ENCODE measurements at regions of chr1 and their contacts with region 1.

Region 1: DNA sequence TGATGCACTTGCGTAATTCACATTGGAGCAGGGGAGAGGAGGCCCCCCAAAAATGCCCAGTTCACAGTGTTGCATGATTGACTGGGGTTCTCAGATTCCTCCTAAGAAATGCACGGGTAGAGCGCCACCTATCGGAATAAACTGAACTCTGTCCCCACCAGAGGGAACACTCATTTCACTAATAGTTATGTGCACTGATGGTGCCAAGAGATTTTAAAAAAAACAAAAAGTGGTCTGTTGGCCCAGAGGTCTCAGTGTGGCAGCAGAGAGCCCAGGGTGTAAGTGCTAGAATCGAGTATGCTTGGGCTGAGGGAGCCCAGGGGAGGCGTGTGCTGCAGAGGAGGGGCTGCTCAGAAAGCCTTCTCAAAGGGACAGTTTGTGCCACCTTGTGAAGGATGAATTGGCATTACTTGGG is 6.9 kb downstream of the PINK1 start:
- DNase-seq: peak in 7 of 9 donors; percentile 34 to 66 (median 59)
- ATAC-seq: peak; percentile 83
- H3K4me3 ChIP-seq: no peak overlapping the region
- H3K4me3 Mint-ChIP-seq: no peak overlapping the region
- H3K27ac ChIP-seq: no peak overlapping the region
- H3K27ac Mint-ChIP-seq: peak overlapping the region in 2 of 9 donors; percentile 39 to 41
- H3K4me1 ChIP-seq: no peaks in the 10 kb centered on the region
- H3K4me1 Mint-ChIP-seq: peaks cover 0 to 9% (median 5%) of the 10 kb centered on the region in 7 donors
- H3K27me3 ChIP-seq: no peaks in the 10 kb centered on the region
- H3K27me3 Mint-ChIP-seq: no peaks in the 10 kb centered on the region

Region 2: GRCh38 chr1:20521960-20522861 is 118.0 kb before region 1 on chr1:
- CTCF ChIA-PET with region 1: interaction called, 3 read pairs
- POLR2A ChIA-PET with region 1: no interaction called
- intact Hi-C with region 1: loop called in 1 of 2 experiments (anchors 1 kb)
- DNase-seq: peak; percentile 28 to 64 (median 55)
- ATAC-seq: peak; percentile 67
- H3K4me3 ChIP-seq: no peak overlapping the region
- H3K4me3 Mint-ChIP-seq: no peak overlapping the region
- H3K27ac ChIP-seq: no peak overlapping the region
- H3K27ac Mint-ChIP-seq: peak overlapping the region in 1 of 9 donors; percentile 44
- H3K4me1 ChIP-seq: no peaks in the 10 kb centered on the region
- H3K4me1 Mint-ChIP-seq: peaks cover 0 to 4% (median 0%) of the 10 kb centered on the region in 7 donors
- H3K27me3 ChIP-seq: peaks cover 0 to 3% of the 10 kb centered on the region in 2 donors
- H3K27me3 Mint-ChIP-seq: peaks cover 7 to 25% (median 22%) of the 10 kb centered on the region in 5 donors

Region 3: GRCh38 chr1:20574686-20575540 is 65.3 kb before region 1 on chr1:
- CTCF ChIA-PET with region 1: no interaction called
- POLR2A ChIA-PET with region 1: no interaction called
- intact Hi-C with region 1: loop called (anchors 1 kb)
- DNase-seq: peak in 8 of 9 donors; percentile 18 to 80 (median 38)
- ATAC-seq: peak; percentile 80
- H3K4me3 ChIP-seq: no peak overlapping the region
- H3K4me3 Mint-ChIP-seq: no peak overlapping the region
- H3K27ac ChIP-seq: no peak overlapping the region
- H3K27ac Mint-ChIP-seq: no peak overlapping the region
- H3K4me1 ChIP-seq: no peaks in the 10 kb centered on the region
- H3K4me1 Mint-ChIP-seq: peaks cover 0 to 10% (median 7%) of the 10 kb centered on the region in 7 donors
- H3K27me3 ChIP-seq: no peaks in the 10 kb centered on the region
- H3K27me3 Mint-ChIP-seq: peaks cover 13 to 43% (median 30%) of the 10 kb centered on the region in 5 donors

Region 4: DNA sequence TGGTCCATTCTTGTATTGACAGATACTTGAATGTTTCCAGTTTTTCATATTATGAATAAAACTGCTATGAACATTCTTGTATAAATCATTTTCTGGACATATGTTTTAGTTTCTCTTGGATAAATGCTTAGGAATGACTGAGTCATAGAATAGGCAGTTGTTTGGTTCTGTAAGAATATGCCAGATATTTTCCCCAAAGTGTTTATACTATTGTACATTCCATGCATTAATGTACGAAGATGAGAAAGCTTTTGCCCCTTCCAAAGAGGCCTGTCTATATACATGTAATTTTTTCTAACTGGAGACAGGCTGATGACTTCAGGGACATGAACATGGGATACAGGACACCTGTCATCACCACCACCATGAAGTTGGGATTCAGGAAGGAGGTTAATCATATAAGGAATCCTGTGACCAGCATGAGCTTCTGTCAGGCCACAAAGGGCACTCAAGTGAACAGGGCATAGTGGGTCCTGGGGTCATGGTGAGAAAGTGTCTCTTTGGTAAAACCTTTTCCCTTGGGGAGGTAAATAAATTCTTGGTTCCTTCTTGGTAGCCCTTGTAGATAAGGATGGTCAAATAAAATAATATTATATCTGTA is 811.1 kb after region 1 on chr1:
- CTCF ChIA-PET with region 1: no interaction called
- POLR2A ChIA-PET with region 1: no interaction called
- intact Hi-C with region 1: no loop called
- DNase-seq: no peak
- ATAC-seq: no peak
- H3K4me3 ChIP-seq: no peak overlapping the region
- H3K4me3 Mint-ChIP-seq: no peak overlapping the region
- H3K27ac ChIP-seq: no peak overlapping the region
- H3K27ac Mint-ChIP-seq: no peak overlapping the region
- H3K4me1 ChIP-seq: no peaks in the 10 kb centered on the region
- H3K4me1 Mint-ChIP-seq: peaks cover 13 to 34% (median 30%) of the 10 kb centered on the region in 7 donors
- H3K27me3 ChIP-seq: no peaks in the 10 kb centered on the region
- H3K27me3 Mint-ChIP-seq: peaks cover 0 to 9% (median 0%) of the 10 kb centered on the region in 5 donors

Measured in naive thymus-derived CD4-positive, alpha-beta T cell (primary cell).